ENCODE measurements at regions of chr5 and their contacts with region 1.

Region 1: GRCh38 chr5:176537608-176538504 is 654 bp upstream of the RNF44 start:
- DNase-seq: peak; percentile 94 to 99
- ATAC-seq: peak; percentile 73 to 84
- H3K4me3 ChIP-seq: peak overlapping the region; percentile 84
- H3K27ac ChIP-seq: peak overlapping the region; percentile 95 to 97
- H3K4me1 ChIP-seq: peaks cover 56% of the 10 kb centered on the region
- CTCF ChIP-seq: no peak
- EP300 ChIP-seq: no peak
- POLR2A ChIP-seq: no peak; the same call in 1 of the 2 replicates
- RAD21 ChIP-seq: no peak

Region 2: DNA sequence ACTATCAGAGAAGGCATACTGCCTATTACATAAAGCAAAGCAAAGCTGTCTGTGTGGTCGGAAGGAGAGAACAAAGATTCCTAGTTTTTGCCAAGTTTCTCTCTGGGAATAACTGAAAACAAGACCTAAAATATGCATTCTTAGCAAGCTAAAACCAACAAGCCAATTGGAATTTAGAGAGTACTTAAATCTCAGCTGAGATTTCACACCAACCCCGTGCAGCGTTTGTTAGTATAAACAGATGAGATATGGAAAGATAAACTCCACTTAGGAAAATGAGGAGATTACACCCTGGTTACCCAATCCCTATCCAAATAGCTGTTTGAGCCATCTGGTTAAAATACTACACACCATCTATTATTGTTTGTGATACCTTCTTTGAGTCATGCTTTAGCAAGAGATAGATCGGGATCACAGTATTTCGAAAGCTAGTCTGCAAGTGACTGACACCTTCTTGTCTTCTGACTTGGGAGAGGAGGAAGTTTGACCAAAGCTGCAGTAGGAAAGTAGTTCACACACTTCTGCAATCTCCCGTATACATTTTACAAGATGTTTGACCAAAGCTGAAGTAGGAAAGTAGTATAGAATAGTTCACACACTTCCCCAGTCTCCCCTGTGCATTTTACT is 71.5 kb before region 1 on chr5:
- CTCF ChIA-PET with region 1: interaction called, 3 read pairs
- POLR2A ChIA-PET with region 1: interaction called, 11 read pairs
- DNase-seq: peak in 1 of 2 experiments; percentile 61
- ATAC-seq: peak; percentile 68 to 78
- H3K4me3 ChIP-seq: no peak overlapping the region
- H3K27ac ChIP-seq: peak overlapping the region in 1 of 2 experiments; percentile 7; a peak in 1 of 6 replicates
- H3K4me1 ChIP-seq: peaks cover 29% of the 10 kb centered on the region
- CTCF ChIP-seq: no peak
- EP300 ChIP-seq: no peak
- POLR2A ChIP-seq: no peak
- RAD21 ChIP-seq: no peak

Measured in A549 (cell line).